Breast epithelium (tissue), 4 donors: ENCODE measurements at regions of chr10 and their contacts with region 1.

Region 1: GRCh38 chr10:105347487-105347886 is 706.4 kb downstream of the SORCS3 start:
- DNase-seq: no peak
- H3K4me3 ChIP-seq: no peak overlapping the region
- H3K27ac ChIP-seq: no peak overlapping the region
- H3K4me1 ChIP-seq: no peaks in the 10 kb centered on the region
- H3K27me3 ChIP-seq: no peaks in the 10 kb centered on the region
- CTCF ChIP-seq: no peak
- POLR2A ChIP-seq: no peak

Region 2: DNA sequence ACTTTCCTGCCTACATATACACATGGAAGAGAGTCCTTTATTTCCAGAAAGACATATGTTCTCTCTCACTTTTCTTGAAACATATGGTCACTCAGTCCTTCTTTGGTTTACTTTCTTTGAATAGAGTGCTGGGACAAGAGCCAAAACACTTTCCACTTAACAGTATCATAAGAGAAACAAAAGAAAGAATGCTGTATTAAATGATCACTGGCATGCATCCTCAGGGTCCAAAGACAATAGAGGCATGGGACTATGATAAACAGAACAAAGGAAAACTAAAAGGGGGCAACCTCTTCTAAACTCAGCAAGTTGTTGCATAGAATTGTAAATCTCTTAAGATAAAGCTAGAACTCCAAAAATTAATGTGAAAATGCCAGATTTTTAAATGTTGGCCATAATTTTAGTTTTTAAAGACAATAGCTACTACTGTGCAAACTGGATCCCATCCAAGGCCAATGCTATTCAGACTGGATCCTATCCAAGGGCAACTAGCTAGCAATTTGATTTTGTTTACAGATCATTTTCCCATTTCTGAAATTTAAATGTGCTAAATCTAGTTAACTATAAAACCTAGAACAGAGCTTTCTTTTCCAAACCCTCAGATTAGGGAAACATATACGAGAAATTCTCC is 18.9 kb before region 1 on chr10:
- intact Hi-C with region 1: loop called (anchors 1 kb)
- DNase-seq: no peak
- H3K4me3 ChIP-seq: no peak overlapping the region
- H3K27ac ChIP-seq: no peak overlapping the region
- H3K4me1 ChIP-seq: no peaks in the 10 kb centered on the region
- H3K27me3 ChIP-seq: no peaks in the 10 kb centered on the region
- CTCF ChIP-seq: no peak
- POLR2A ChIP-seq: no peak